Heart right ventricle (tissue), 16 donors: ENCODE measurements at regions of chr9 and their contacts with region 1.

Region 1: GRCh38 chr9:78035383-78035993 is 3.9 kb upstream of the GNAQ start:
- DNase-seq: peak in 1 of 2 donors; percentile 71
- ATAC-seq: peak in 6 of 8 donors; percentile 8 to 48 (median 30)
- H3K4me3 ChIP-seq: no peak overlapping the region
- H3K27ac ChIP-seq: peak overlapping the region in 5 of 10 donors; percentile 27 to 65 (median 37)
- H3K4me1 ChIP-seq: peaks cover 7 to 39% (median 21%) of the 10 kb centered on the region in 9 donors
- H3K27me3 ChIP-seq: no peaks in the 10 kb centered on the region
- CTCF ChIP-seq: peak; percentile 73 to 87 (median 81)

Region 2: DNA sequence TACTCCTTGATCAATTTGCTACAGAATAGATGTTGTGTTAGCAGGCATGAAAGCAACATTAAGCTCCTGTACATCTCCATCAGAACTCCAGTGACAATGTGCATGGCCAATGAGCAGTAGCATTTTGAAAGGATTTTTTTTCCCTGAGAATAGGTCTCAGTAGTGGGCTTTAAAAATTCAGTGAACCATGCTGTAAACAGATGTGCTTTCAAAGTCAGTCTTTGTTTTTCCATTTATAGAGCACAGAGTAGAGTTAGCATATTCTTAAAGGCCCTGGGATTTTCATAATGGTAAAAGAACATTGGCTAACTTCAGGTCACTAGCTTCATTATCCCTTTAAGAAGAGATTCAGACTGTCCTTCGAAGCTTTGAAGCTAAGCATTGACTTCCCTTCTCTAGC is 707.4 kb before region 1 on chr9:
- intact Hi-C with region 1: no loop called
- DNase-seq: no peak
- ATAC-seq: no peak
- H3K4me3 ChIP-seq: no peak overlapping the region
- H3K27ac ChIP-seq: no peak overlapping the region
- H3K4me1 ChIP-seq: no peaks in the 10 kb centered on the region
- H3K27me3 ChIP-seq: no peaks in the 10 kb centered on the region
- CTCF ChIP-seq: no peak

Region 3: DNA sequence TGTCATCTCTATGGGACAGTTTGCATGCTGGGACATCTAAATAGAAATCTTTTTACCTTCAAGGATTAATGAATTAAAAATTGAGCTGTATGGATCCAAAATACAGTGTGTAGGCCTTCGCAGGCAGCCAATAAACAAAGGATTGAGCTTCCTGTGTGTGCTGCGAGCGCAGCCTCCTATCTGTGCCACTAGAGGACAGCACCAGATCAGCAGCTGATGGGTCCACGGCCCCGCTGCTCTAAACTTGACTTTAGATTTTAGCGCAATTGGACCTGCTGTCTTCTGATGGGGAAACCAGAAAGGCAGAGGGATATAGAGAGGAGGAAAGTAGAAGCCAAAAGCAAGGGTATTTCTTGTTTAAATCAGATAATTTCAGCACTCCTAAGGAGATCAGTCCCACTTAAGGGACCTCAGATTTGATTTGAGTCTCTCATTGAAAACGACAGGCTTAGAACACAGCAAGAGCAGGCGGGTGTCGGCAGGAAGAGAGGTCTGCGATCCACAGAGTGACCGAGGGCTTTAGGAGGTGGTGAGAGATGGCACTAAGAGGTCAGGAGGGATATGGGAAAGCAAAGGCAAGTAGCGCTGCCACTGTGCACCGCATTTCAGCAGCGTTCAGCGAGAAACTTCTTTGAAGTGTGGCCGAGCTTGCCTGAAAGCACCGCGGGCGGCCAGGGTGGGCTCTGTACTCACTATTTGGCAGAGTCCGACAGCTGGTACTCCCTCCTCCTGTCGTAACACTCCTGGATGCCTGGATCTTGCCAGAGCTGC is 601.6 kb before region 1 on chr9:
- intact Hi-C with region 1: loop called in 2 of 10 experiments (anchors 10 kb)
- DNase-seq: peak; percentile 46 to 53
- ATAC-seq: peak; percentile 65 to 89 (median 83)
- H3K4me3 ChIP-seq: no peak overlapping the region
- H3K27ac ChIP-seq: no peak overlapping the region
- H3K4me1 ChIP-seq: peaks cover 0 to 7% (median 0%) of the 10 kb centered on the region in 9 donors
- H3K27me3 ChIP-seq: peaks cover 0 to 4% (median 0%) of the 10 kb centered on the region in 7 donors
- CTCF ChIP-seq: peak; percentile 88 to 96 (median 93)

Region 4: DNA sequence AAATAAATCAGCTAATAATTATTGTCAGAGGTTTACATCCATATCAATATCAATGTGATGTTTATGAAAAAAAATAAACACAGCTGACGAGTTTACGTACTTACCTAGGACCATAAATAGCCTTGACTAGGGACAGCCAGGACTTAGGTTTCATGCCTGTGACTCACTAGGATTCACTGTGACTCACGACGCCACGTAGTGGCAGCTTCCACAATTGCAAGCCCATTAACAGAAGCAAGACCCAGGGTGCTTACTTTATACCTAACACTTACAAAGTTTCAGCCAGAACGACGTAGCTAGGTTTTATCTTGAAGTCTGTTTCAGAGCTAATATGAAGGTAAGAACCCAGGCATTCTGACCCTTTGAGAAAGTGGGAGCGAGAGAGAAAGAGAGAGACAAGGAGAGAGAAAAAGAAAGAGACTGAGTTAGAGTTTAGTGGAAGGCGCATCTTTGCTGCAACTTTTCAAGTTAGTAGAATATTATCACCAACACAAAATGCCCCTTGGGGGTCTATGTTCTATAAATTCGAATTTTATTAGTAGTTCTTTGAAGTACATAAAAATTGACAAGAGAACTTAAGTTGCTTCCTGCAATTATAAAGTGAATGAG is 578.6 kb before region 1 on chr9:
- intact Hi-C with region 1: loop called in 4 of 10 experiments (anchors 5 to 10 kb)
- DNase-seq: peak; percentile 79 to 80
- ATAC-seq: peak; percentile 68 to 90 (median 84)
- H3K4me3 ChIP-seq: no peak overlapping the region
- H3K27ac ChIP-seq: no peak overlapping the region
- H3K4me1 ChIP-seq: peaks cover 0 to 17% (median 4%) of the 10 kb centered on the region in 9 donors
- H3K27me3 ChIP-seq: no peaks in the 10 kb centered on the region
- CTCF ChIP-seq: peak; percentile 74 to 96 (median 86)

Region 5: DNA sequence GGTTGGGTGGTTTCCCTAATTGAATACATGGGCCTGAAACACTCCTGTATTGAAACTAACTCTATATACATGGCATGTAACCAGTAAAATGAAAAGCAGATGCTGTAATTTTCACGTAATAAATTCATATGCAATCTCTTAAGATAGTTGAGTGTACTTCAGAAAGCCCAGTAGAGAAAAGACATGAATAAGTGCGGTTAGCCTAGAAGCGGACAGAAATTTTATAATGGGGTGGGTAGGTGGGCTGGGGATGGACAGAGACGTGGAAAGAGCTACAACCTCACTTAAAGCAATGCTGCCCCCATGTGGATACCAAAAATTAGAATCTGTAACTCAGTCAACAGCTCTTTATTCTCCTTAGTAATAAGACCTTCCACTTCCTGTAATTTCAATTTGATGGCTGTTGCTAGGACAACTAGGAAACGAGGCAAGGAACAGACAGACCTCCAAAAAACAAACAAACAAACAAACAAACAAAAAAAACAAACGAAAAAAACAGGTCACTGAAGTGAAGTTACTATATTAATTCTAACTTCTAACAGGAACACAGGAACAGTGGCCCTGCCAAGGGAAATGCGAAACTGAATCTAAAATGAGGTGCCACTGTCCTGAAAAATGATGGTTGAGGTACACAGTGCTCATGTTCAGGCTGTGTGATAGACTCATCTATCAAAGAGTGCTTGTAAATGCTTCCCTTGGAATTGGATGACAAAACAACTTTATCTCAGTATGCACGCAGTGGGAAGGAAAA is 284.0 kb before region 1 on chr9:
- intact Hi-C with region 1: loop called in 3 of 10 experiments (anchors 10 kb)
- DNase-seq: peak in 1 of 2 donors; percentile 61
- ATAC-seq: peak in 7 of 8 donors; percentile 63 to 93 (median 77)
- H3K4me3 ChIP-seq: no peak overlapping the region
- H3K27ac ChIP-seq: peak overlapping the region in 4 of 10 donors; percentile 5 to 37 (median 12)
- H3K4me1 ChIP-seq: peaks cover 0 to 22% (median 10%) of the 10 kb centered on the region in 9 donors
- H3K27me3 ChIP-seq: no peaks in the 10 kb centered on the region
- CTCF ChIP-seq: peak; percentile 24 to 72 (median 53)

Region 6: GRCh38 chr9:77848897-77849296 is 186.6 kb before region 1 on chr9:
- intact Hi-C with region 1: loop called in 5 of 10 experiments (anchors 2 to 10 kb)
- DNase-seq: peak; percentile 23 to 39
- ATAC-seq: peak; percentile 62 to 94 (median 76)
- H3K4me3 ChIP-seq: no peak overlapping the region
- H3K27ac ChIP-seq: peak overlapping the region in 9 of 10 donors; percentile 51 to 81 (median 62)
- H3K4me1 ChIP-seq: peaks cover 5 to 89% (median 58%) of the 10 kb centered on the region in 9 donors
- H3K27me3 ChIP-seq: no peaks in the 10 kb centered on the region
- CTCF ChIP-seq: no peak

Region 7: DNA sequence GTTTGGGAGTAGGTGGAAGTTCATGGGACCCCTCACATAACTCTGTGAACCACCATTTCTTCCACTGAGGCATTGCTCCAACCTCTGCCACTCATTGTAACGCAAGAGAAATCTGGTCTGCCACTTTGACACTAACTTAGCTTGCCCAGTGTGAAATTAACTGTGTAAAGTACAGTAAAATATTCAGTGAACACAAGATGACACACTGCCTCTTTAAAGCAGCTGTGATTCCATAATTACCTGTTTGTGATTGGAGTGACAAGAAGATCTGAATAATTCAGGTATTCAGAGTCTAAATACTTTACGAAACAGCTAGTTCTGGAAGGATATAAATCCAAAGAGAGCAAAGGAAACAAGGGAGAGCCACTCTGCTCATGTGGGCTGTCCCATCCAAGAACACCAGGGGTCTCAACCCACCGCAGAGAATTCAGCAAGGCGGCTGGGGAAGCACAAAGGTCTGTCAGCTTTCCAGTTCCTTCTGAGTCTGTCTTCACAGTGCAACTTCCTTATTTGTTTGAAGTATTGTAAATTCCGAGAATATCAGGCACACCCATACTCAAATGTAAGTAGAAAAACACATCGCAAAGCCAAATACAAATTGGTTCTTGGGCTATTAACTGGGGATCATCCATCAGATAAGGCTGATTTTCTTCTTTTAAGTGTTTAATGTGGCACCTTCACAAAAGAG is 90.8 kb before region 1 on chr9:
- intact Hi-C with region 1: no loop called
- DNase-seq: peak in 1 of 2 donors; percentile 34
- ATAC-seq: peak; percentile 38 to 80 (median 68)
- H3K4me3 ChIP-seq: peak overlapping the region in 3 of 10 donors; percentile 1 to 8 (median 8)
- H3K27ac ChIP-seq: peak overlapping the region in 9 of 10 donors; percentile 6 to 87 (median 67)
- H3K4me1 ChIP-seq: peaks cover 2 to 70% (median 45%) of the 10 kb centered on the region in 9 donors
- H3K27me3 ChIP-seq: no peaks in the 10 kb centered on the region
- CTCF ChIP-seq: peak in 6 of 9 donors; percentile 5 to 46 (median 24)

Region 8: GRCh38 chr9:78064075-78064474 is 28.6 kb after region 1 on chr9:
- intact Hi-C with region 1: no loop called
- DNase-seq: no peak
- ATAC-seq: no peak
- H3K4me3 ChIP-seq: no peak overlapping the region
- H3K27ac ChIP-seq: no peak overlapping the region
- H3K4me1 ChIP-seq: peaks cover 0 to 4% (median 0%) of the 10 kb centered on the region in 9 donors
- H3K27me3 ChIP-seq: no peaks in the 10 kb centered on the region
- CTCF ChIP-seq: no peak